Dendritic cell treated with granulocyte-macrophage colony-stimulating factor and Interleukin-4, amounts not matched to agents 40 ng/mL and 50 ng/mL, for 4 days (primary cell): ENCODE measurements at regions of chr9 and their contacts with region 1.

Region 1: GRCh38 chr9:6412487-6413364 is at the start of gene UHRF2:
- H3K4me3 Mint-ChIP-seq: peak within 1 kb of the TSS; percentile 86
- H3K27ac Mint-ChIP-seq: peak within 1 kb of the TSS; percentile 87
- H3K4me1 Mint-ChIP-seq: peaks cover 27% of the 10 kb centered on the region
- H3K27me3 Mint-ChIP-seq: no peaks in the 10 kb centered on the region

Region 2: DNA sequence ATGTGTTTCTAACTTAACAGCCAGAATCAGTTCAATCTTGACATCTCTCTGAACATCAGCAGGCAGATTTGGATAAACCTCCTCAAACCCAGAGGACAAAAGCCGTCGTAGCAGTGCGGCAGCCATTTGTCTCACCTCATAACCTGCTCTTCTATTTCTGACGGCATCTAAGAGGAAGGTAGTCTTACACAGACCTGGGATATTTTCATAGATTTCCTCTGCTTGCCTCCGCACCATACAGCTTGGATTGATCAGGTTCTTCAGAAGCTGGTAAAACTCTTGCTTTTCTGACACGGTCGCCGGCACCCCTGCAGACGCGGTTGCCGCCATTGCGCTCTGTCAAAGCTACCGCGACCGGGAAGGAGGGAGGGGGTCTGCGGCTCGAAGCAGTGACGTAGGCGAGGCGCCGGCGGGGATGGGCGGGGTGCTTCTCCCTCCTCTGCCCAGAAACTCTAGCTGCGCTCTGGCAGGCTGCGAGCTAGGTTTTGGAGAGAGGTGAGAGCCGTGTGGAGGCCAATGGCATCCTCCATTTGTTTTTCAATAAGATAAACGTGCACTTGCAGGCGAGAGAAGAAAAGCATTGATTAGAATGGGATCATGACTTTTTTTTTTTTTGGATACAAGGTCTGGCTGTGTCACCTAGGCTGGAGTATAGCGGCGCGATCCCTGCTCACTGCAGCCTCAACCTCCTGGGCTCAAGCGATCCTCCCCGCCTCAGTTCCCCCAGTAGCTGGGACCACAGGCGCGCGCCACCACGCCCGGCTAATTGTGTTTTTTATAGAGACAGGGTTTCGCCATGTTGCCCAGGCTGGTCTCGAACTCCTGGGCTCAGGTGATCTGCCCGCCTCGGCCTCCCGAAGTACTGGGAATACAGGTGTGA is 397.2 kb before region 1 on chr9 and contains the start of gene RANBP6:
- intact Hi-C with region 1: loop called (anchors 10 kb)
- H3K4me3 Mint-ChIP-seq: peak within 1 kb of the TSS; percentile 90
- H3K27ac Mint-ChIP-seq: peak within 1 kb of the TSS; percentile 92
- H3K4me1 Mint-ChIP-seq: peaks cover 27% of the 10 kb centered on the region
- H3K27me3 Mint-ChIP-seq: no peaks in the 10 kb centered on the region

Region 3: DNA sequence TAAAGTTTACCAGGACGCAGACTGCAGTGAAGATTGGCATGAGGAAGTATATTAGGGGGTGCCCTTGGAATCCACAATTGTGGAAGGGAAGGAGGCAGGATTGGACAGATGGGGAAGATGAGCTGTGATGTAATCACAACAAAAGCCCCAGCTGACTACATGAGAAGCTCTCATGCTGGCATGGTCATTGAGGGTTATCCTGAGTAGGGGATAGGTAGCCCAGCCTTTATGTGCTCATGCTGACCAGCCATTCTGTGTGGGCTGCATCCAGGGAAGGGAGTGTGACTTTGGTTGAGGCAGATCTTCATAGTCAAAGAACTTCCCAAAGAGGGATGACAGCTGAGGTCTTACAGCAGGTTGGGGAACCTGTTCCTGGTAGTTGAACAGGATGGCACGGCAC is 345.3 kb before region 1 on chr9:
- intact Hi-C with region 1: no loop called
- H3K4me3 Mint-ChIP-seq: no peak overlapping the region
- H3K27ac Mint-ChIP-seq: no peak overlapping the region
- H3K4me1 Mint-ChIP-seq: peaks cover 13% of the 10 kb centered on the region
- H3K27me3 Mint-ChIP-seq: no peaks in the 10 kb centered on the region

Region 4: DNA sequence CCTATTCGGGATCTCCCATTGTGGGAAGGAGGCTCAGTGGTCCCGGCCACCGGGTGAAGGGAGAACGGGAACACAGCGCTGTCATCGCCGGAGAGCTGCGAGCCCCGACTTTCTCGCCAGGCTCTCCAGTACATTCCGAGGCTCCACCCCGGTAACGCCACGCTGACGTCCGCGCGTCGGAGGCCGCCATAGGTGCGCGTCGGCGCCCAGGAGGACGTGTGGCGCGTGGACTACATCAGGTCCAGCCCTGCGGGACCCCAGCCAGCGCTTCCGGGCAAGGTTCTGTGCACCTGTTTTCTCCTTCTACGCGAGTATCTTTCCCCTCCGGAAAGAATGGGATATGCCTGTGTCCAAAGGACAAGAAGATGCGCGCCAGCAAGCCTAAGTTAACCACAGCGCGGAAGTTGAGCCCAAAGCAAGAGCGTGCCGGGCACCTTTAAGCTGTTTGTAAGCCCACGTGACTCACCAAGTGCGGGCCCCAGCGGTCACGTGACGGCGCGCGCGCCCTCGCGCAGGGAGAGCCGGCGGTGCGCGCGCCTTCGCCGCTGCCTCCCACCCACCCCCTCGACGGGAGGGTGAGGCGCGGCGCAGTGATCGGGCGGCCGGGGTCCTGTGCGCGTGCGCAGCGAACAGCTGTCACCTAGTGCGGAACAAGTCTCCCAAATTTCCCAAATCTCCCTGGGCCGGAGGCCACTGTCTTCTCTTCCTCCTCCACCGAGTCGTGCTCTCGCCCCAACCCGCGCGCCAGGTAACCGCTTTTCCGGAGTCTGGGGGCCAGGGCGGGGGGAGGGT is 344.9 kb after region 1 on chr9 and contains the start of gene KDM4C:
- intact Hi-C with region 1: loop called (anchors 2 kb)
- H3K4me3 Mint-ChIP-seq: peak within 1 kb of the TSS; percentile 87
- H3K27ac Mint-ChIP-seq: peak within 1 kb of the TSS; percentile 100
- H3K4me1 Mint-ChIP-seq: peaks cover 28% of the 10 kb centered on the region
- H3K27me3 Mint-ChIP-seq: no peaks in the 10 kb centered on the region